Tibial artery (tissue), 4 donors: ENCODE measurements at regions of chr17 and their contacts with region 1.

Region 1: DNA sequence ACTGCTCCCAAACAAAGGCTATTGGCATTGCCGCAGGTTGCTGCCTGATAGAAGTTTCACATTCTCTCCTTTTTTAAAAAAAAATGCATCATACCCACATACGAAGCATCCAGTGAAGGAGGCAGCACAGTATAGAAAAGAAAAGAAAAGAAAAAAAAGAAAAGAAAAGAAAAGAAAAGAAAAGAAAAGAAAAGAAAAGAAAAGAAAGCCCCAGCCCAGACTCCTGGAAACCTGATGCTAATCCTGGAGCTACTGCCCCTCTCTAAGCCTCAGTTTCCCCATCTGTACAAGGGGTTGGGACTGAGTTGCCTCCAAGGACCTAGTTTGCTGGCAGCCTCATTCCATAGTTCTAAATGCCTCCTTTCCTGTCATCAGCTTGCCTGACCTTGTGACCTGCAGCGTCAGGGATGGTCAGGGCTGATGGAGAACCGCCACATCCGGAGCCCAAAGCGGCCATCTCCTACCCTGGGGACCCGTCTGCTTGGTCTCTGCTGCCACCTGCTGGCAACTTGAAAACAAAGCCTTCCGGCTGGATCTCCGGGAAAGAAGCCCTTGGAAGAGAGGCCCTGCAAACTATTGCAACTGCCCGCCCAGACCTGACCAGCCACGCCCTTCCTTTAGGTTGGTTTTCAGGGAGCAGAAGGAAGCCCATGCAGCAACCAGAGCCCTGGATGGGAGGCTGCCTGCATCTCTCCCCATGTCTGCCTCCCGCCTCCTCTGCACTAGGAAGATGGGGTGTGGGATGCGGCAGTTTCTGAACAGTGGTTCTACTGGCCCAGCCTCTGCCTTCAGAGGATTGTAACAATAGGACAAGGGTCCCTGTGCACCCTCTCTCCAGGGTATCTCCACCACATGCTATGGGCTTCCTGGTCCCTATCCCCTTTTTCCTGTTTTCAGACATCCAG is 13.0 kb downstream of the AIPL1 start:
- DNase-seq: peak; percentile 77 to 84
- H3K4me3 ChIP-seq: no peak overlapping the region
- H3K27ac ChIP-seq: no peak overlapping the region
- H3K4me1 ChIP-seq: no peaks in the 10 kb centered on the region
- H3K27me3 ChIP-seq: peaks cover 0 to 54% of the 10 kb centered on the region in 2 donors
- CTCF ChIP-seq: peak; percentile 82 to 93

Region 2: GRCh38 chr17:5584383-5585286 is 837.3 kb before region 1 on chr17 and contains the start of gene NLRP1:
- intact Hi-C with region 1: loop called (anchors 5 kb)
- DNase-seq: peak; percentile 96
- H3K4me3 ChIP-seq: peak within 1 kb of the TSS; percentile 55 to 58
- H3K27ac ChIP-seq: peak within 1 kb of the TSS; percentile 78 to 84
- H3K4me1 ChIP-seq: peaks cover 0 to 42% (median 15%) of the 10 kb centered on the region in 4 donors
- H3K27me3 ChIP-seq: no peaks in the 10 kb centered on the region
- CTCF ChIP-seq: no peak

Region 3: GRCh38 chr17:7314719-7315569 is 893.0 kb after region 1 on chr17 and contains the start of gene GPS2:
- intact Hi-C with region 1: no loop called
- DNase-seq: peak; percentile 91 to 95
- H3K4me3 ChIP-seq: peak within 1 kb of the TSS; percentile 77 to 78
- H3K27ac ChIP-seq: peak within 1 kb of the TSS; percentile 89 to 92
- H3K4me1 ChIP-seq: peaks cover 0 to 49% (median 35%) of the 10 kb centered on the region in 4 donors
- H3K27me3 ChIP-seq: no peaks in the 10 kb centered on the region
- CTCF ChIP-seq: no peak